ENCODE measurements at regions of chr6 and their contacts with region 1.

Region 1: DNA sequence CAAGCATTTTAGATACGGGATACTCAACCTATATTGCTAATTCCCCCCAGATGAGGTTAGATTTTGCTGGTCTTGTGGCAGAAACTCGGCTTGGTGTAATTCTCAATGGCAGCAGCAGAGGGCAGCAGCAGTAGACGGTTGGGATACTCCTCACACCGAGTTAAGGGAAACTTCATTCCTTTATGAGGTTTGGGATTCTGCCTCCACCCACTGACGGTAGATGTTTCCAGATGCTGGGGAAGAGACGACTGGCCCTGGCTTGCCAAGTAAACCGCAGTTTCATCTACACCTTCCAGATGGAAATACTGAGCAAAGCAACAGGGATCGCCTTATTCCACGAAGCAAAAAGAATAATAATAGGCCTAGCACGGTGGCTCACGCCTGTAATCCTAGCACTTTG is 8.2 kb upstream of the TBC1D7 start:
- DNase-seq: peak; percentile 85
- H3K4me3 ChIP-seq: no peak overlapping the region
- H3K27ac ChIP-seq: no peak overlapping the region
- H3K4me1 ChIP-seq: peaks cover 13% of the 10 kb centered on the region
- H3K27me3 ChIP-seq: no peaks in the 10 kb centered on the region
- CTCF ChIP-seq: peak; percentile 82 to 85
- POLR2A ChIP-seq: no peak

Region 2: DNA sequence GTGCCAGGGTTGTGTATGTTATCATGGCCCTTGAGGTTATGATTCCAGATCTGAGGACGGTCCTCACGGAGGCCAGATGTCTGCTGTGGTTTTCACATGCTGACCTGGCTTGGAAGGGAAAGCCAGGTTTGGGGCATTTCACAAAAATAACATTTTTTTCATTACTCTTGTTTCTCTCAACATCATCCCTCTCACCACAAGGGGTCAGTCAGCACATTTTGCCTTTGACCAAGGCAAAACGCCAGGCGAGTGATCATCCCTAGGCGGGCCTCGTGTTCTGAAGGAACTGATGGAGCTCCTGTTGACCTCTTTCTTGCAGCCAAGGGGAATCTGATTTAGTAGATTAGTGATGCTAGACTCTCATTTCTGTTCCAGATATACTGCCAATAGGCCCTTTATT is 141.7 kb before region 1 on chr6:
- CTCF ChIA-PET with region 1: interaction called, 45 read pairs
- POLR2A ChIA-PET with region 1: no interaction called
- dilution Hi-C with region 1: no loop called
- intact Hi-C with region 1: no loop called
- DNase-seq: peak; percentile 69
- H3K4me3 ChIP-seq: no peak overlapping the region
- H3K27ac ChIP-seq: no peak overlapping the region
- H3K4me1 ChIP-seq: no peaks in the 10 kb centered on the region
- H3K27me3 ChIP-seq: no peaks in the 10 kb centered on the region
- CTCF ChIP-seq: peak; percentile 51 to 72
- POLR2A ChIP-seq: no peak

Region 3: DNA sequence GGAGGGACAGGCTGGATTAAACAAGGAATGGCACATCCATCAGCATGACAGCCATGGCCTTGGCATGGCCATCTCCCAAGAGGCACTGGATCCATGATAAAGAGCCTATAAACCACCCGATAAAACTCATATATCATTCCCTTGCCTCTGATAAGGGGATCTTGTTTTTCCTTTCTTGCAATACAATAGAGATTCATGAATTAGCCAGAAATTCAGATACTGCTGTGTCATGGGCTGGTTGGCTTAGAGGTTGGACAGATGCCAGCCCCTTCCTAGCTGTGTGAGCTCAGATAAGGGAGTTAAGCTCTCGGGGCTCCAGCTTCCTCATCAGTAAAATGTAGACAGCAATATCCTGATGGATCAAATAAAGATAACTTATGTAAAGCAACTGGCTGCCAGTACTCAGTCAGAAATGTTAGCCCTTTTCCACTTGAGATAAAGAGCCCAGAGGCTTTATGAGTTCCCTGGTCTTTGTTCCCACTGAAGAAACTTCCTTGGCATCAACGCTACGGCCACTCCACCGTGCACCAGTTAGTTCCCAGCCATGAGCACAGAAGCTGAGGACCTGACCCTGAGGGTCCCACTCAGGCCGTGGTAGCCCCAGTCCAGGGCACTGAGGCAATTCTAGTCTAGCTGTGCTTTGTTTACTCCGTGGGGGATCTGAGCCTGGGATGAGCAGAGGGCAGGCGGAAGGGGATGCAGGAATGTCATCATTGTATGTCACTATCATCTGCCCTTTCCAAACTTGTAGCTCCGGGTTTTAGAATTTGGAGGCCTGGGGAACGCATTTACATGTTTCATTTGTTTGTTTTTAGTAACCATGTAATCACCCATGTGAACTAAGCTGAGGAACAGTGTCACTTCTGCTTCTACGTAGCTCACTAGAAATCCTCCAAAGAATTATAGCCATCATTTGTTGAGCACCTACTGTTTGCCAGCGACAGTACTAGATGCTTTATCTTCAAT is 59.0 kb after region 1 on chr6:
- CTCF ChIA-PET with region 1: interaction called, 4 read pairs
- POLR2A ChIA-PET with region 1: interaction called, 3 read pairs
- dilution Hi-C with region 1: no loop called
- intact Hi-C with region 1: loop called (anchors 1 kb)
- DNase-seq: peak; percentile 100
- H3K4me3 ChIP-seq: no peak overlapping the region
- H3K27ac ChIP-seq: peak overlapping the region; percentile 92
- H3K4me1 ChIP-seq: peaks cover 19% of the 10 kb centered on the region
- H3K27me3 ChIP-seq: no peaks in the 10 kb centered on the region
- CTCF ChIP-seq: no peak
- POLR2A ChIP-seq: peak; percentile 65

Region 4: GRCh38 chr6:13526727-13527670 is 190.4 kb after region 1 on chr6:
- CTCF ChIA-PET with region 1: interaction called, 6 read pairs
- POLR2A ChIA-PET with region 1: interaction called, 8 read pairs
- dilution Hi-C with region 1: no loop called
- intact Hi-C with region 1: loop called (anchors 1 kb)
- DNase-seq: peak; percentile 94
- H3K4me3 ChIP-seq: no peak overlapping the region
- H3K27ac ChIP-seq: peak overlapping the region; percentile 65
- H3K4me1 ChIP-seq: peaks cover 37% of the 10 kb centered on the region
- H3K27me3 ChIP-seq: no peaks in the 10 kb centered on the region
- CTCF ChIP-seq: no peak
- POLR2A ChIP-seq: peak; percentile 63

Region 5: DNA sequence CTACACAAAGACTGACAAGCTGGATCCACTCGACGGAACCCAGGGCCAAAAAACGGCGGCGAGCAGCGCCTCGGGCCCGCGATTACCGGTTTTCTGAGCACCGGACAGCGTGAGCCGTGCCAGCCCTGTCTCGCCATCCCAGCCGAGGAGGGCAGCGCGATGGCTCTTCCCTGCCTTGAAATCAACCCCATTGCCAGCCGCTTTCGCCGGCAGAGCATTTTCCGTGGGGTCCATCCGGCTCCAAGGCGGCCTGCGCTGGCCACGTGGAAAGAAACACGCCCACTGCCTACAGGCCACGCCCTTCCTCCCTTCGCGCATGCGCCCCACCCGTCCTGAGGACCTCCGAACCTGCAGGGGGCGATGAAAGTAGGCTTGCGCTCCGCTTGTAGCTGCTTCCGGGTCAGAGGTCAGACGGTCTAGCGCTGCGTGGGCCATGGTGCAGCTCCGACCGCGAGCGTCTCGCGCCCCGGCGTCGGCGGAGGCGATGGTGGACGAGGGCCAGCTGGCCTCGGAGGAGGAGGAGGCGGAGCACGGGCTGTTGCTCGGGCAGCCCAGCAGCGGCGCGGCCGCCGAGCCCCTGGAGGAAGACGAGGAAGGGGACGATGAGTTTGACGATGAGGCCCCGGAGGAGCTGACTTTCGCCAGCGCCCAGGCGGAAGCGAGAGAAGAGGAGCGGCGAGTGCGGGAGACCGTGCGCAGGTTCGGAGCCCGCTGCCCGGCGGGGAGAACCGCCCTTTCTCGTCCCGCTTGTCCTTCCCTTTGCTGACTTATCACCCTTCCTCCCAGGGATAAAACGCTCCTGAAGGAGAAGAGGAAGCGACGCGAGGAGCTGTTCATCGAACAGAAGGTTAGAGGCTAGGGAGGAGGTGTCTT is 278.6 kb after region 1 on chr6 and contains the start of gene NOL7:
- CTCF ChIA-PET with region 1: interaction called, 12 read pairs
- POLR2A ChIA-PET with region 1: no interaction called
- dilution Hi-C with region 1: no loop called
- intact Hi-C with region 1: loop called (anchors 1 kb)
- DNase-seq: peak; percentile 98
- H3K4me3 ChIP-seq: peak within 1 kb of the TSS; percentile 89 to 99 (median 98)
- H3K27ac ChIP-seq: peak within 1 kb of the TSS; percentile 78
- H3K4me1 ChIP-seq: peaks cover 17% of the 10 kb centered on the region
- H3K27me3 ChIP-seq: no peaks in the 10 kb centered on the region
- CTCF ChIP-seq: peak; percentile 97 to 98
- POLR2A ChIP-seq: peak; percentile 67
- total RNA-seq, gene NOL7: 75.6 and 80.0 TPM in 2 replicates

Region 6: GRCh38 chr6:14066782-14067406 is 730.3 kb after region 1 on chr6:
- CTCF ChIA-PET with region 1: no interaction called
- POLR2A ChIA-PET with region 1: no interaction called
- dilution Hi-C with region 1: no loop called
- intact Hi-C with region 1: loop called (anchors 5 kb)
- DNase-seq: peak; percentile 61
- H3K4me3 ChIP-seq: no peak overlapping the region
- H3K27ac ChIP-seq: no peak overlapping the region
- H3K4me1 ChIP-seq: no peaks in the 10 kb centered on the region
- H3K27me3 ChIP-seq: peaks cover 5 to 18% of the 10 kb centered on the region in 2 experiments
- CTCF ChIP-seq: peak; percentile 47 to 52
- POLR2A ChIP-seq: no peak

Measured in endothelial cell of umbilical vein (primary cell).